ENCODE measurements at regions of chr15 and their contacts with region 1.

Region 1: DNA sequence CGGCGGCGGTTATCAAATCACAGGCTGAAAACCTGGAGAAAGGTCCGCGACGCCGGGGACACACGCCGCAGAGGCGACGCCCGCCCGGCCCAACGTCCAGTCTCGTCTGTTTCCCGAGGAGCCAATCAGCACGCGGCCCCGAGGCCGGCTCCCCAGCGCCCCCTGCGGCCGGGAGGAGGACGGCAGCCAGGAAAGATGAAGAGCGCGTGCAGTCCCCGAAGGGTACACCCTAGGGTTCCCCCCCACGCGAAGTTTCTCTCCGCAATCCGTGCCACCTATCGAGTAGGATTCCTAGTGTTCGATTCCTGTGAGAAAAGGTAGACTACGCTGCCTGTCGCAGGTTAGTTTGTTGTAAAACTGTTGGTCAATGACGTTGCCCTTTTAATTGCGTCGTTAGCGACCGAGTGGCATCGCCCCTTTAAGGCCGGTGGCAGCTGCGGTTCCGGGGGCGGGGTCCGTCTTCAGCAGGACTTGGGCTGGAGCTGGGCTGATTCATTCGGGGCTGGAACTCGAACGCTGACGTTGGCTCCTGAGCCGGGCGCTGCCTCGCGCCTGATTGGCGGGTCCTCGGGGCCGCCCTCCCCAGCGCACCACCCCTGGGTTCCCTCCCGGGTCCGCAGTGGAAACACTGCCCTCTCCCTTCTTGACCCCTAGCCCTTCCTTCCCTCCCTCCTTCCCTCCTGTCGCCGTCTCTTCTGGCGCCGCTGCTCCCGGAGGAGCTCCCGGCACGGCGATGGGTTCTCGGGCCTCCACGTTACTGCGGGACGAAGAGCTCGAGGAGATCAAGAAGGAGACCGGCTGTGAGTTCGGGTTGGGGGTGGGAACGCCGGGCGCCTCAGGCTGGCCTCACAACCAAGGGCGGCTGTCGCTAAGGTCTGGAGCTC is at the starts of genes CHP1 and EXD1:
- DNase-seq: peak; percentile 89 to 99
- H3K4me3 ChIP-seq: peak within 1 kb of the TSS; percentile 70 to 89
- H3K27ac ChIP-seq: peak within 1 kb of the TSS; percentile 80 to 96
- H3K4me1 ChIP-seq: peaks cover 0 to 23% of the 10 kb centered on the region in 2 donors
- H3K27me3 ChIP-seq: no peaks in the 10 kb centered on the region
- CTCF ChIP-seq: peak; percentile 97 to 99 (median 99)
- total RNA-seq, gene CHP1: 294 TPM
- total RNA-seq, gene EXD1: not detected

Region 2: DNA sequence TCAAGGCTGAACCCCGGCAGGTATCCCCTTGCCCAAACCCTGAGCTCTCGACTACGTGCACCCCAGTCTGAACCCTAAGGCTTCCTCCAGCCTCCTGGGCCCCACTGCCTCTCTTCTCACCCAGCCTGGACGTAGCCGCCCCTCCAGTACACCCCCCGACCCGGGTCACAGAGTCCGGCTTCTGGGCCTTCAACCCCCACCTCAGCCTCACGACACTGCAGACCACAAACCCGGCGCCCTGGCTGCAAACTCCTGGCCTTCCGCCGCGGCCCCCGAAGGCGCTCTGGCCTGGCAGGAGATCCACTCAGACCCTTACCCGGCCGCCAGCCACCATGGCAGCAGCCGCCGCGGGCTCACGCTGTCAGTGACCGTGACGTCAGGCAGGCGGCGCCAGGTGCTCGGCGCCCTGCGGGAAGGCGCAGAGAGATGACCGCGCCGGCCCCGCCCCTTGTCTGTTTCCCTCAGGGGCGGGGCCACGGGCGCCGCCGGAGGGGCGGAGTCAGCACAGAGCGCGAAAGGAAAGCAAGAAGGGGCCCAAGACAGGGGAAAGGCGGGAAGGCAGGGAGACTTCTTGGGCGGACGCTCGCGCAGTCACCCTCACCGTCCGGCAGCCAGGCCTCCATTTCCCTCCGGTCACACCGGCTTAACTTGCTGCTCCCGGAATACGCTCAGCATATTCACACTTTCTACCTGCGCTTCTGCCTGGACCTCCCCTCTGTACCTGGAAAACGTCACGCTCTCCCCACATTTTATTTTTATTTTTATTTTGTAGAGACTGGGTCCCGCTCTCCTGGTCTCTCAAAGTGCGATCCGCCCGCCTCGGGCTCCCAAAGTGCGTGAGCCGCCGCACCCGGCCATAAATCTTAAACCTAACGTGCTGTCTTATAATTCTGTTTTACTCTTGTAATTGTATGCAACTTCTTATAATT is 475.7 kb before region 1 on chr15 and contains the start of gene RMDN3:
- intact Hi-C with region 1: loop called (anchors 5 kb)
- DNase-seq: peak; percentile 62 to 95
- H3K4me3 ChIP-seq: peak within 1 kb of the TSS; percentile 95 to 98
- H3K27ac ChIP-seq: peak within 1 kb of the TSS; percentile 85 to 86
- H3K4me1 ChIP-seq: peaks cover 0 to 12% of the 10 kb centered on the region in 2 donors
- H3K27me3 ChIP-seq: no peaks in the 10 kb centered on the region
- CTCF ChIP-seq: peak in 1 of 3 experiments; percentile 17
- total RNA-seq, gene RMDN3: 6.0 TPM

Region 3: DNA sequence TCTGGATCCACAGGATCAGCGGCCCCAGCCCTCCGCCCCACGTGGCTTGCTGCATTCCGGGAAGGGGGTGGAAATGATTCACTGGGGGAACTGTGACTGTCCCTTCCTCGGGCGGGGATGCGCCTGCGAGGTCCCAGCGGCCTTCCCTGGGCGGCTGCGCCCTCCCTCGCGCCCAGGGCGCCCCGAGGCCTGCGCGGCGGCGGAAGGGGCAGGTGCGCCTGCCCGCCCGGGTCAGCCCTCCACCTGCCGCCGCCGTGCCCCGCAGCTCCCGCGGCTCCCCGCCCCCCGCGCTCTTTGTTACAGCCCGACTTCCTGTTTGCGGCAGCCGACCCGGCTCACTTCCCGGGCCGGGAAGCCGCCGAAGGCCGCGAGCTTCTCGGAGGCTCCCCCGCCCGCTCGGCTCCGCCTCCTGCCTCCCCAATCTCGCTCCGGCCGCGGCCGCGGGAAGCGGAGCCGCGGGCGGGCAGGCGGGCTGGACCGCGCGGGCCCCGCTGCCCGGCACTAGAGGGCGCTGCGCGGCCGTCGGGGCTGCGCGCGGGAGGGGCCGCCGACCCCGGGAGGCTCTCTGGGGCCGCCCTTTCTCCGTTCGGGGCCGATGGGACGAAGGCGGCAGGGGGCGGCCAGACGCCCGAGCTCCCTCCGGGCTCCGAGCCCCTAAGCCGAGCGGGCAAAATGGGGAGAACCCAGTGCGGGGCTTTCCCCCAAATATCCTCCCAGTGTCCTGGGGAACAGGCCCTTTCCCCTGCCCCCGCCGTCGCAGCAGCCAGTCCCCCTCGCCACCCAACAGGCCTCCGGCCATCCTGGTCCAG is 289.2 kb before region 1 on chr15:
- intact Hi-C with region 1: loop called (anchors 5 kb)
- DNase-seq: peak in 1 of 2 donors; percentile 84
- H3K4me3 ChIP-seq: peak overlapping the region; percentile 69 to 70
- H3K27ac ChIP-seq: peak overlapping the region; percentile 77 to 88
- H3K4me1 ChIP-seq: peaks cover 0 to 17% of the 10 kb centered on the region in 2 donors
- H3K27me3 ChIP-seq: no peaks in the 10 kb centered on the region
- CTCF ChIP-seq: peak in 2 of 3 experiments; percentile 32 to 94

Region 4: DNA sequence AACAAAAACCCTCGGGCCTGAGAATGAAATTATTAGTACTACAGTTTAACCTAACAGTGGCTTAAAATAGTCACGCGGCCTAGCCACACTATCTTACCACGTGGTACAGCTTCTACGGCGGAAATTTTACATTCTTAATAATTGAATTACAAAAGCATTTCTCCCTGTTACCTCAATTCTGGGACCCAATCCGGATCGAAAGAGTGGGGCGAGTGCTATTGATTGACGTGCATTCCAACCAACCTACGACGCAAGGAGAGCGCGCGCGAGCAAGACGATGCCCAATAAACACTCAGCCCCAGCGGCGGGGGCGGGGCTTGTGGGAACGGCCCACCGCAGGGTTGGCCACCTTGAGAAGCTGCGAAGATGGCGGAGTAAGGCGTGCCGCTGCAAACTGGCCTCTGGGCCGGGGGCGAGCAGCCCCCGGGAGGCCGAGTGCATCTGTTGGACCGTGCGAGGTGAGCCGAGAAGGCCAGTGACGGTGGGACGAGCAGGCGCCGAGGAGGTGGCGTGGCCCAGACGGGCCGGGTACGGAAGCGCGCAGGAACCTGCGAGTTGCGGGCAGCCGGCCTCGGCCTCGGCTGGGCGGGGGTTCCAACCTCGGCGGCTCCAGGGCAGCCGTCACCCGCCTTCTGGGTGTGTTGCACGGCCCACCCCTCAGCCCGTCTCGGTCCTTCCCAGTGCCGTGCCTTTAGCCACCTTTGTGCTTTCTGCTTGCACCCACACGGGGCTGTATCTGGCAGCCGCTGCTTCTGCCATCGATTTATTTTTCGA is 52.9 kb after region 1 on chr15:
- intact Hi-C with region 1: loop called (anchors 1 kb)
- DNase-seq: peak; percentile 89 to 99
- H3K4me3 ChIP-seq: peak overlapping the region; percentile 72 to 88
- H3K27ac ChIP-seq: peak overlapping the region; percentile 83 to 84
- H3K4me1 ChIP-seq: peaks cover 6 to 16% of the 10 kb centered on the region in 2 donors
- H3K27me3 ChIP-seq: no peaks in the 10 kb centered on the region
- CTCF ChIP-seq: no peak

Region 5: DNA sequence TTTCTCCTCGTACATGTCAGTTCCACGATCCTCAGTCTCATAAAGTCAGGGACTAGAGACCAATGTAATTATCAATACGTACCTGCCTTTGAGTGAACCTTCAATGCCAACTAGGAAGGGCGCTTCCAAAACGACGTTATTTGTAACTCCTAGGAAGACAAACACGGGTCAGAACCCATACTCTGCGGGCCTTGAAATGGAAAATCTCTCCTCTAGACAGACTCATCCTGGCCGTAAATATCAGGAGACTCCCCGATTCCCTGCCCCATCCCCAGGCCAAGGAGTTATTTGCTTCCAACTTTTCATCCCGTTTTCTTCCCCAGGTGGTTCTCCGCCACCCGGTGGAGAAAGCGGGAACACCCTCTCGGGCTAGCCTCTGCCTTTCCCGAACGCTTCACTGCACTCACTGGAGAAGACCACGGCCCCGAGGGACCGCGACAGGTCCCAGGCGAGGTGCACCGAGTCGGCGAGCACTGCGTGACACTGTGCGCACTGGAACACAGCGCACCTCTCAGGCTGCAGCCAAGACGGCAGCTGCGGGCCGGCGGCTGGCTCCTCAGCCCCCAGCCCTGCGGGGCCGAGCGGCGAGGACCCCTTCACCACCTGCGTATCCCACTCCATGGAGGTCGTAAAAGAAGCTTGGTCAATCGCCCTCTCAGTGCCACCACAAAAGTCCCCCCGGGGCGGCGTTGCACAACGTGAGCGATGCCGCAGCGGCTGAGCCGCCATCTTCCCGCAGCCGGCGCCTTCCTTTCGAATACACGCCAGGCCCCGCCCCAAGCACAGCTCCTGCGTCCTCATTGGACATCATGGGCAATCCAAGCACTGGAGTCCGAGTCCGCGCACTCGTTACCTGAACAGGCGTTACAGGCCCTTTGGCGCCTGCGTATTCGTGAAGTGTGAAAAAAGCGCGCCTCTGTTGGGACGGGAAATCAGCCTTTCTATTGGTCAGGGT is 101.2 kb after region 1 on chr15 and contains the start of gene OIP5:
- intact Hi-C with region 1: loop called (anchors 2 kb)
- DNase-seq: peak; percentile 96 to 99
- H3K4me3 ChIP-seq: peak within 1 kb of the TSS; percentile 89 to 91
- H3K27ac ChIP-seq: peak within 1 kb of the TSS in 1 of 2 donors; percentile 40
- H3K4me1 ChIP-seq: peaks cover 0 to 8% of the 10 kb centered on the region in 2 donors
- H3K27me3 ChIP-seq: no peaks in the 10 kb centered on the region
- CTCF ChIP-seq: peak; percentile 59 to 74 (median 67)
- total RNA-seq, gene OIP5: not detected

Region 6: DNA sequence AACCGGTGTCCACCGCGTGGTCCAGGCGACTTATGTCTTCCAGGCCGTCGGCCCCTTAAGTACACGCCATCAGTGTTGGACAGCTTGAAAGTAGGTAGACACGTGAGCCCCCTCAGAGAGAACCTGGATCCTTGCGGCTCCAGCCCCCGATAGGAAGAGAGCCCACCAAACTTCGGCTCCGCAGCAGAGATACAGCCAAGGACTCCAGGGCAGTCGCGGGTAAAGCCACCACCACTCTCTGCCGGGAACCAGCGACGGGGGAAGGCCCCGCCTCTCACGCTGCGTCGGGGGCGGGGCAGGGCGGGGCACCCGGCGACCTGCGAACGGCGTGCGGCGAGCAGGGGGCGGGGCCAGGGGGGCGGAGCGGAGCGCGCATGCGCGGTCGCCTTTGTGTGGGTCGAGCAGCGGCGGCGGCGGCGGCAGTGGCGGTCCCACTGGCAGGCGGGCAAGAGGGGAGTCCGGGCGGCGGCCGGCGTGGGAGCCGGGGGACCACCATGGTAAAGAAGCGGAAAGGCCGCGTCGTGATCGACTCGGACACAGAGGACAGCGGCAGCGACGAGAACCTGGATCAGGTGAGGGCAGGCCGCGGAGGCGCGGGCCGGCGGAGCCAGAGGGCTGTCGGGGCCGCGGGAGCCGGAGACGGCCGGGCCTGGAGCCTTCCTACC is 186.0 kb after region 1 on chr15 and contains the start of gene RTF1:
- intact Hi-C with region 1: loop called (anchors 2 kb)
- DNase-seq: peak; percentile 68 to 96
- H3K4me3 ChIP-seq: peak within 1 kb of the TSS; percentile 70 to 86
- H3K27ac ChIP-seq: peak within 1 kb of the TSS; percentile 73 to 80
- H3K4me1 ChIP-seq: peaks cover 7 to 13% of the 10 kb centered on the region in 2 donors
- H3K27me3 ChIP-seq: no peaks in the 10 kb centered on the region
- CTCF ChIP-seq: no peak
- total RNA-seq, gene RTF1: 9.4 TPM

Region 7: GRCh38 chr15:42511010-42511396 is 1280.1 kb after region 1 on chr15:
- intact Hi-C with region 1: loop called (anchors 5 kb)
- DNase-seq: no peak
- H3K4me3 ChIP-seq: peak overlapping the region; percentile 19 to 24
- H3K27ac ChIP-seq: peak overlapping the region; percentile 71 to 76
- H3K4me1 ChIP-seq: peaks cover 0 to 38% of the 10 kb centered on the region in 2 donors
- H3K27me3 ChIP-seq: no peaks in the 10 kb centered on the region
- CTCF ChIP-seq: no peak

Measured in ascending aorta (tissue), 2 donors.